ENCODE measurements at regions of chr15 and their contacts with region 1.

Region 1: GRCh38 chr15:72758182-72758581 is 25.4 kb downstream of the ADPGK start:
- DNase-seq: no peak
- H3K4me3 ChIP-seq: no peak overlapping the region
- H3K27ac ChIP-seq: no peak overlapping the region
- H3K4me1 ChIP-seq: no peaks in the 10 kb centered on the region
- H3K27me3 ChIP-seq: no peaks in the 10 kb centered on the region
- CTCF ChIP-seq: no peak

Region 2: DNA sequence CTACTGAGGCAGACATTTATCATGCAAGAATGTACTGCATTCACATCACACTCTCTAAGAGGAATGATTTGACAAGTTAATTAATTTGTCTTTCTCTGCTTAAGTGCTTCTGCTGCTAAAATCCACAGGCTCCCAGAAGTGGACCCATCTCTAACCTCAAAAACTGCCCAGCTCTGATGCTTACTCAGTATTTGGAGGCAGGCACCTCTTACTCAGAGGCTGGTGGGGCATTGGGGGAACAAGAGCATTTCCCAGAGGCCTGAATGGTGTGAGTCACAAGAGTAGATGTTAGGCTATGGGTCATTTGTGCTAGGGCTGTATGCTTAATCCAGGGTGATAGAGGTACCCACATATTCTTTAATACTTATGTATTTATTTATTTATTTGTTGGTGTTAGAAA is 645.0 kb after region 1 on chr15:
- CTCF ChIA-PET with region 1: no interaction called
- POLR2A ChIA-PET with region 1: interaction called, 10 read pairs
- intact Hi-C with region 1: no loop called
- DNase-seq: no peak
- H3K4me3 ChIP-seq: no peak overlapping the region
- H3K27ac ChIP-seq: no peak overlapping the region
- H3K4me1 ChIP-seq: no peaks in the 10 kb centered on the region
- H3K27me3 ChIP-seq: no peaks in the 10 kb centered on the region
- CTCF ChIP-seq: no peak